ENCODE measurements at regions of chr10 and their contacts with region 1.

Region 1: DNA sequence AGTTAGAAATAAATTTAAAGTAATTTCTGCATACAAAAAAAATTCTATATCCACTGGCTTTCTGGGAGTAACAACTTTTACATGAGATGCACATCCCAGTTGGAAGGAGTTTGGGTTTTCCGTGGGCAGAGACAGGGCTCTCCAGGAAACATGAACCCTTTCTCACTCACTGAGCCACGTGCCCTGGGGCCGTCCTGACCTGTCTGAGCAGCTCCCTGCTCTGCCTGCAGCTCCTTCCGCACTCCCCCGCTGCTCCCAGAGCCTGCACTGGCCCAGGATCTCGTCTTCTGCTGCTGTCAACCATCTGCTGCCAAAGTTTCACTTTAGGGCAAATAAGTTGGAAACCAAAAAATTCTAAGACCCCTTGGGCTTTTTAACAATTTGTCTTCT is 169.1 kb downstream of the DIP2C start:
- DNase-seq: peak; percentile 77
- H3K4me3 ChIP-seq: no peak overlapping the region
- H3K27ac ChIP-seq: peak overlapping the region in 3 of 4 donors; percentile 27 to 74 (median 67)
- H3K4me1 ChIP-seq: peaks cover 0 to 71% (median 48%) of the 10 kb centered on the region in 4 donors
- H3K27me3 ChIP-seq: no peaks in the 10 kb centered on the region
- CTCF ChIP-seq: no peak
- EP300 ChIP-seq: no peak
- POLR2A ChIP-seq: no peak

Region 2: DNA sequence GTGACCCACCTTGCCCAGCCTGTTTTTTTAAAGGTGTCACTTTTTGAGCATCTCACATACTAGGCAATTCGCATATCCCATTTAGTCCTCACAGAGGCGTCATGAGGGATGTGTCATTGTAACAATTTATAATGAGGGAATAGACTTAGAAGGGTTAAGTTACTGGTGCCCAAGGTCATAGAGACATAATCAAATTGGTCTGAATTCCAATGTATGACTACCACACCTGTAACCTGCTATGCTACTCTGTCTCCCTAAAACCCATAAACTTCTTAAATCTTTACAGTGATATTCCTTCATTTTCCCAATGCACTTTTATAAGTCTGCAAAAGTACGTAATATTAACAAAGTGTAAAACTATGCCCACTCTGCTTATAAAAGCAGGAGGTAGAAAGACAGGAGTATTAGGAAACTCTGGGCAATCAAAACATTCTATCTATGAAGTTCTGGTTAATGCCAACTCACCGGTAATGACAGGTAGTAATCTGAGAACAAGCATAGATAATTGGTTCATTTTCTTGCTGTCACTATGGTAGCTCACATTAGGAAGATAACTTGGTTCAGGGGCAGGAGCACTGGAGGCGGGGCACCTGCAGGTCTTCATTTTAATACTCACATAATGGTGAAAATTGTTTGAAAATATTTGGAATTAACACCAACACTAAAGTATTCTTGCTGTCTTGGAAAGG is 377.9 kb before region 1 on chr10:
- intact Hi-C with region 1: no loop called
- DNase-seq: no peak
- H3K4me3 ChIP-seq: no peak overlapping the region
- H3K27ac ChIP-seq: no peak overlapping the region
- H3K4me1 ChIP-seq: peaks cover 0 to 56% (median 34%) of the 10 kb centered on the region in 4 donors
- H3K27me3 ChIP-seq: no peaks in the 10 kb centered on the region
- CTCF ChIP-seq: no peak
- EP300 ChIP-seq: no peak
- POLR2A ChIP-seq: no peak

Region 3: DNA sequence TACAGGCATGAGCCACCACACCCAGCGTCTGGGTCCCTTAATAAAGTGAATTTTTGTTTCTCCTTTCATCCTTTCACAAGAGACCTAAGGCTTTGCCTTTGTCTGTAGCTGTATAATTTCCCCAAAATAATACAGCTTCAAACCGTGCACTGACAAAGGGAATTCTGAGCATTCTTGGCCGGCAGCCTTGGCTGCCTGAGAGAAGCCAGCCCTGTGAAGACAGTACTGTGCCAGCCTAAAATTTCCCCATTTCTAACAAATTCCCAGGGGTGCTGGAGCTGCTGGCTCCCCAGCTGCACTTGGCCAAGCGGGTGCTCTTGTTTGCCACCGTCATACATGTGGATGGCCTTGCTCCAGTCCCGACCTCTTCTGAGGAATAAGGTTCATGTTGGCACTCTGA is 278.9 kb before region 1 on chr10:
- intact Hi-C with region 1: no loop called
- DNase-seq: no peak
- H3K4me3 ChIP-seq: no peak overlapping the region
- H3K27ac ChIP-seq: peak overlapping the region in 2 of 4 donors; percentile 18 to 20
- H3K4me1 ChIP-seq: peaks cover 0 to 17% (median 9%) of the 10 kb centered on the region in 4 donors
- H3K27me3 ChIP-seq: no peaks in the 10 kb centered on the region
- CTCF ChIP-seq: no peak
- EP300 ChIP-seq: peak in 1 of 4 donors; percentile 15
- POLR2A ChIP-seq: no peak

Region 4: GRCh38 chr10:561721-562120 is 41.3 kb after region 1 on chr10:
- intact Hi-C with region 1: loop called (anchors 5 kb)
- DNase-seq: no peak
- H3K4me3 ChIP-seq: no peak overlapping the region
- H3K27ac ChIP-seq: peak overlapping the region in 2 of 4 donors; percentile 51 to 52
- H3K4me1 ChIP-seq: peaks cover 0 to 86% (median 63%) of the 10 kb centered on the region in 4 donors
- H3K27me3 ChIP-seq: no peaks in the 10 kb centered on the region
- CTCF ChIP-seq: no peak
- EP300 ChIP-seq: no peak
- POLR2A ChIP-seq: no peak

Region 5: DNA sequence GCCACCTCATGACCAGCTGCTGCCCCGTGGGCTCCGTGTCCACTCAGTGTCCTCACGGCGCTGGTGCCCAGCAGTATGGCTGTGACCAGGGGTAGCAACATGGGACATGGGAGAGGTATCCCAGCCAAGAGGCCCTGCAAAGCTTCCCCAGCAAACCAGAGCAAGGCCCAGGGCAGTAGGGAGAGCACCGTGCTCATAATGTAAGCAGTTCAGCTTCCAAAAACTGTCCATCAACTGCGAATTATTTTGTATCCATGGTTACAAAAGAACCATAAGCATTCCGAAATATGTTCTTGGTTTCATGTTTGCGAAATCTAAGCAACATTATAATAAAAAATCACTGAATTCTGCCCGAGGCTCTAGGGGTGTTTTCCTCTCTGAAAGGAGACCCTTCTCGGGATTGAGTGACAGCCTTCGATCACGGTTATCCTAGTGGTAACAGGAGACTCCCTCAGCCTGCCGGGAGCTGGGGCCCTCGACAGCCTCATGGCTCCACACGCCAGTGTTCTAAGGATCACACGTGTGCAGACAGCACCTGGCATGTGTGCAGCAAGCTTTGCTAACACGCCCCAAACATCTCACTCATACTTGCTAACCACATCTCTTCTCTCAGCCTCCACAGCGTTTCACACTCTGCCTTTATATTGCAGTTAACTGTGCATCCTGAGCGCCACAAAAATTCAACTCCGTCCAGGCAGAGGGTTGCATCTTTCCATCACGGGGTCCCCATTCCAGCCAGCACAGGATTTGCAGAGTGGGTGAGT is 51.5 kb after region 1 on chr10:
- intact Hi-C with region 1: loop called (anchors 5 kb)
- DNase-seq: no peak
- H3K4me3 ChIP-seq: peak overlapping the region in 1 of 4 donors; percentile 1
- H3K27ac ChIP-seq: peak overlapping the region; percentile 55 to 79 (median 72)
- H3K4me1 ChIP-seq: peaks cover 0 to 77% (median 65%) of the 10 kb centered on the region in 4 donors
- H3K27me3 ChIP-seq: no peaks in the 10 kb centered on the region
- CTCF ChIP-seq: no peak
- EP300 ChIP-seq: no peak
- POLR2A ChIP-seq: no peak

Region 6: GRCh38 chr10:615583-616152 is 95.3 kb after region 1 on chr10:
- intact Hi-C with region 1: no loop called
- DNase-seq: no peak
- H3K4me3 ChIP-seq: no peak overlapping the region
- H3K27ac ChIP-seq: peak overlapping the region in 3 of 4 donors; percentile 59 to 79 (median 79)
- H3K4me1 ChIP-seq: peaks cover 0 to 96% (median 93%) of the 10 kb centered on the region in 4 donors
- H3K27me3 ChIP-seq: no peaks in the 10 kb centered on the region
- CTCF ChIP-seq: no peak
- EP300 ChIP-seq: no peak
- POLR2A ChIP-seq: no peak

Measured in sigmoid colon (tissue), 7 donors.